Psoas muscle (tissue), 8 donors: ENCODE measurements at regions of chr1 and their contacts with region 1.

Region 1: DNA sequence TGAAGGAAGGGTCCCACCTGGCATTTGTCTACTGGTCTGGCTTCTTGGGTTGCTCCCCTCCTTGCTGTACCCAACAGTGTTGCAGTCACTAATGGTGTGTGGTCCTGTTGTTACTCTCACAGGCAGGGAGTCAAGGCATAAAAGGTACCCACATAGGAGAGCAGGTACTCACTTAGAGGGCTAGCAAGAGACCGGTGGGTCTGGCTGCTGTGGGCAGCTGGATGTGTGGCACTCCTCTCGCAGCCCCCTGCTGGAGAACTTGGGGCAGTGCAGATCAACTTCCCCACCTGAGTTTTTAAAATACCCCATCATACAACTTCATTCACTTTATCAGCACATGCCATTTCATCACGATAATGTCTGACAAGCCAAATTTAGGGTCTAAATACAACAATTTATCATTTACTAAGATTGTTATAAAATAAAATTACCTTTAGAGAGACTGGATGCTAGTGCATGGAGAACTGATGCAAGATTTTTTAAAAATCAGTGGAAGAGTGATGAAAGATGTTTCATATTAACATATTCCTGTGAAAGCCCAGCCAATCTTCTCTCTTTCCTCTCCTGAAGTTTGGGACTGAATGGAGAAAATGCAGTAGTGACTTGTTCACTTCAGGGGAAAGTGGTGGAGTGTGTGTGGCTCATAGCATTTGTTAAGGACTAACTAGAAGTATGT is 42.8 kb downstream of the ACP6 start:
- DNase-seq: peak; percentile 43 to 72
- ATAC-seq: peak; percentile 80 to 85 (median 83)
- H3K4me3 ChIP-seq: no peak overlapping the region
- H3K27ac ChIP-seq: no peak overlapping the region
- H3K4me1 ChIP-seq: peaks cover 15% of the 10 kb centered on the region
- H3K27me3 ChIP-seq: no peaks in the 10 kb centered on the region
- CTCF ChIP-seq: peak; percentile 95

Region 2: GRCh38 chr1:147494998-147495580 is 132.5 kb before region 1 on chr1:
- intact Hi-C with region 1: loop called in 1 of 2 experiments (anchors 5 kb)
- DNase-seq: peak; percentile 61 to 78
- ATAC-seq: peak; percentile 89 to 97 (median 96)
- H3K4me3 ChIP-seq: no peak overlapping the region
- H3K27ac ChIP-seq: no peak overlapping the region
- H3K4me1 ChIP-seq: peaks cover 6% of the 10 kb centered on the region
- H3K27me3 ChIP-seq: no peaks in the 10 kb centered on the region
- CTCF ChIP-seq: peak; percentile 95

Region 3: GRCh38 chr1:147515046-147515869 is 112.3 kb before region 1 on chr1:
- intact Hi-C with region 1: loop called (anchors 5 kb)
- DNase-seq: no peak
- ATAC-seq: peak; percentile 95 to 99 (median 96)
- H3K4me3 ChIP-seq: no peak overlapping the region
- H3K27ac ChIP-seq: peak overlapping the region; percentile 43
- H3K4me1 ChIP-seq: peaks cover 12% of the 10 kb centered on the region
- H3K27me3 ChIP-seq: no peaks in the 10 kb centered on the region
- CTCF ChIP-seq: peak; percentile 50

Region 4: GRCh38 chr1:147541672-147542568 is 85.7 kb before region 1 on chr1:
- intact Hi-C with region 1: loop called in 1 of 2 experiments (anchors 5 kb)
- DNase-seq: peak; percentile 45 to 65
- ATAC-seq: peak; percentile 40 to 58 (median 47)
- H3K4me3 ChIP-seq: peak overlapping the region; percentile 68
- H3K27ac ChIP-seq: peak overlapping the region; percentile 88
- H3K4me1 ChIP-seq: peaks cover 53% of the 10 kb centered on the region
- H3K27me3 ChIP-seq: no peaks in the 10 kb centered on the region
- CTCF ChIP-seq: no peak